ENCODE measurements at regions of chr12 and their contacts with region 1.

Region 1: GRCh38 chr12:68319988-68320623 is 12.1 kb downstream of the MDM1 start:
- DNase-seq: no peak
- H3K4me3 ChIP-seq: no peak overlapping the region
- CTCF ChIP-seq: no peak

Region 2: DNA sequence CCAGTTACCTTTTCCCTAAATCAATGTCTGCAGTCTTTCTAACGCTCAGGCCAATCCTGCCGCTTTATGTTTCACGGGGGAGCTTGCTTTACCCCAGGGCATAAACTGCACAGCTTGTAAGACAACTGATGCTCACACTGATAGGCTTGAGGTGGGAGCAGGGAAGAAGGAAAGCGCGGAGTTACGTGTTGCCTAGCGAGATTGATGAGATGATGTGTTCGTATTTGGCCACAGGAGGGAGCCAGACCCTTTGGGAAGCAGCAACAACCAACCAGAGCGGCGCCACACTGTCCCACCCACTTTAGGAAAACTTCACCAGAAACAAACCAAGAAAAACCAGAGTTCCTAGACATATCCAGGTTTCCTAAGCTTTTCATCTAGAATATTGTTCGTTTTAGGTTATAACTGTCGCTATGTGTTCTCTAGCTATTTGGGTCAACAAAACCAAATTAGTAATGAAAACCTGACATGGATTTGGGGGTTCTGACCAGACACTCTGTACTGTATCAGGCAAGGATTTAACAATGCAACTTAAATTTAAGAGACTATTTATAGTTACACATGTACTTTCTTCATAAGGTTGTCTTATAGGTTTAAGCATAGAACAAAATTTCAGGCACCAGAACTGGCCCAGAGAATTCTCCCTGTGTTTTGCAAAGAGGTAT is 96.9 kb before region 1 on chr12:
- in situ Hi-C with region 1: loop called (anchors 10 kb)
- DNase-seq: peak; percentile 82
- H3K4me3 ChIP-seq: no peak overlapping the region
- CTCF ChIP-seq: peak; percentile 81